ENCODE measurements at regions of chr1 and their contacts with region 1.

Region 1: GRCh38 chr1:167533851-167534300 is 15.5 kb upstream of the CD247 start:
- DNase-seq: peak in 1 of 2 donors; percentile 79
- H3K4me3 ChIP-seq: no peak overlapping the region
- H3K27ac ChIP-seq: no peak overlapping the region
- H3K4me1 ChIP-seq: no peaks in the 10 kb centered on the region
- H3K27me3 ChIP-seq: no peaks in the 10 kb centered on the region
- CTCF ChIP-seq: peak; percentile 60 to 92 (median 90)

Region 2: DNA sequence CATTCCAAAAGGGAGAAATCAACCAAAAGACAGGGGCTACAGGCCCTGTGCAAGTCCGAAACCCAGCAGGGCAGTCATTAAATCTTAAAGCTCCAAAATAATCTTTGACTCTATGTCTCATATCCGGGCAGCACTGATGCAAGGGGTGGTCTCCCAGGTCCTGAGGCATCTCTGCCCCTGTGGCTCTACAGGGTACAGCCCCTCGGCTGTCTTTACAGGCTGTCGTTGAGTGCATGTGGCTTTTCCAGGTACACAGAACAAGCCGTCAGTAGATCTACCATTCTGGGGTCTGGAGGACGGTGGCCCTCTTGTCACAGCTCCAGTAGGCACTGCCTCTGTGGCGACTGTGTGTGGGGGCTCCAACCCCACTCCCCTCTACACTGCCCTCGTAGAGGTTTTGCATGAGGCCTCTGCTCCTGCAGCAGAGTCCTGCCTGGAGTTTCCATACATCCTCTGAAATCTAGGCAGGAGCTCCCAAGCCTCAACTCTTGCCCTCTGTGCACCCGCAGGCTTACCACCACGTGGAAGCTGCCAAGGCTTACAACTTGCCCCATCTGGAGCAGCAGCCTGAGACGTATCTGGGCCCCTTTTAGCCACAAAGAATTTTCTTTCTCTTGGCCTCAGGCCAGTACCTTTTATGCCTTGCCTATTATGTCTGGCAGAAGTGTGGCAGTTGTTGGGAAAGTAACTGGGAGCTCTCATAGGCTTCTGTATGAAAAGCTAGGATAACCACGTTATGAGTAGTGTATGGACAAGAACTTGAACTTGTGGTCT is 260.7 kb before region 1 on chr1:
- intact Hi-C with region 1: loop called (anchors 5 kb)
- DNase-seq: no peak
- H3K4me3 ChIP-seq: no peak overlapping the region
- H3K27ac ChIP-seq: no peak overlapping the region
- H3K4me1 ChIP-seq: peaks cover 3 to 19% of the 10 kb centered on the region in 2 donors
- H3K27me3 ChIP-seq: no peaks in the 10 kb centered on the region
- CTCF ChIP-seq: no peak

Region 3: GRCh38 chr1:167401260-167401873 is 132.5 kb before region 1 on chr1:
- intact Hi-C with region 1: loop called (anchors 10 kb)
- DNase-seq: no peak
- H3K4me3 ChIP-seq: no peak overlapping the region
- H3K27ac ChIP-seq: no peak overlapping the region
- H3K4me1 ChIP-seq: no peaks in the 10 kb centered on the region
- H3K27me3 ChIP-seq: no peaks in the 10 kb centered on the region
- CTCF ChIP-seq: peak in 2 of 3 experiments; percentile 31 to 38

Region 4: DNA sequence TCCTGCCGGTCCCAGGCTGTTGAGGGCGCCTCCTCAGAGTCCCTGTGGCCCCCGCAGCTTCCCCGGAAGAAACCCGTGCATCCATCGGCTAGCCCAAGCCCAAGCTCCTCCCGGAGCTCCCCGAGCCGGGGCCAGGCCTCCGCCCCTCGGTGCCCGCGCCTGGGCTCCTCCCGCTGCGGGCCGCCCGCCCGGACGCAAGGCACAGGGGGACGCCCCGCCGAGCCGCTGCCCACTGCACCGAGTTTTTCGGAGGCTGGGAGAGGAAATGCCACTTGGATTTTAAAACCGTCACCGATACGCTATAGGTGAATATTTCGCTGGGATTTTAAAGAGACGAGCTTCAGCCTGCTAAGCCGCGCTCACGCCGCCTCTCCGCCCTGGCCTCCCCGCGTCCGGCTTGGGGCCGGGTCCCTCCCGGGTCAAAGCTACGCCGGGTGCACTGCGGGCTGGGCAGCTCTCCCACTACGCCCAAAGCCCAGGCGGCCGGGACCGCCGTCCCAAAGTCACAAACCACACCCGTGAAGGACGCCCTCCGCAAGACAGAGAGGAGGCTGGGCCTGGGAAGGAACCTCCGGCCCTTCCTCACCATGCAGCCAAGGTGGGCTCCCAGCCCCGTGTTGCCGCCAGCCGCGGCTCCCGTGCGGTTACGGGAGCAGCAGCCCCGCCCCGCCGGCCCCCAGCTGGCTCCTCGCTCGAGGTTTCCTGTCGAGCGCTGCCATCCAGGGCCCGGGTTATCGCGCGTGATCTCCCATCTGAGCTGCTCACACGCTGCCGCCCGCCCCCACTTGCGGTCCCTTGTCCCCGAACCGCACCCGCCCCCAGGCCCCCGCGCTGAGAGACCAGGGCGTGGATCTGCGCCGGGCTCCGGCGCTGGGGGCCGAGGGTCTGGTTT is 78.7 kb before region 1 on chr1:
- intact Hi-C with region 1: loop called (anchors 5 kb)
- DNase-seq: peak in 1 of 2 donors; percentile 84
- H3K4me3 ChIP-seq: peak overlapping the region; percentile 82 to 96
- H3K27ac ChIP-seq: peak overlapping the region; percentile 88 to 91
- H3K4me1 ChIP-seq: peaks cover 0 to 4% of the 10 kb centered on the region in 2 donors
- H3K27me3 ChIP-seq: no peaks in the 10 kb centered on the region
- CTCF ChIP-seq: no peak

Region 5: GRCh38 chr1:168195199-168196135 is 661.6 kb after region 1 on chr1:
- intact Hi-C with region 1: no loop called
- DNase-seq: no peak
- H3K4me3 ChIP-seq: no peak overlapping the region
- H3K27ac ChIP-seq: no peak overlapping the region
- H3K4me1 ChIP-seq: no peaks in the 10 kb centered on the region
- H3K27me3 ChIP-seq: no peaks in the 10 kb centered on the region
- CTCF ChIP-seq: no peak